Ascending aorta (tissue), 2 donors: ENCODE measurements at regions of chr12 and their contacts with region 1.

Region 1: GRCh38 chr12:24488091-24488596 is 460.8 kb downstream of the BCAT1 start:
- DNase-seq: no peak
- H3K4me3 ChIP-seq: no peak overlapping the region
- H3K27ac ChIP-seq: peak overlapping the region; percentile 13 to 19
- H3K4me1 ChIP-seq: peaks cover 0 to 18% of the 10 kb centered on the region in 2 donors
- H3K27me3 ChIP-seq: no peaks in the 10 kb centered on the region
- CTCF ChIP-seq: no peak

Region 2: DNA sequence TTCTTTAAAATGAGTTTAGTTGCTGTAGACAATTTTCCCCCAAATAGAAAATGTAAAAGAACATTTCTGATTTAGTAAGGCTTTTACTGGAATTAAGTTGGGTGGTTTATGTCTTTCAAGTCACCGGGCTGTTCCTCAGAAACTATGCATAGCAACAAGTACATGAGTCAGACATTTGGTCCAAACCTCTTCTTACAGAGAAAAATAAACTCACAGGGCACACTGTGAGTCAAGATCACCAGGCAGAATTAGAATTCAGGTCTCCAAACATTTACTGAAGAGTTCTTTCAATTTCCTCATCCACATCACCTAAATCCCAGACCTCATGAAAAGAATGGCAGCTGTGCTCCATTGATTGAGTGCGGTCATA is 62.6 kb before region 1 on chr12:
- intact Hi-C with region 1: loop called (anchors 5 kb)
- DNase-seq: no peak
- H3K4me3 ChIP-seq: no peak overlapping the region
- H3K27ac ChIP-seq: peak overlapping the region; percentile 61 to 72
- H3K4me1 ChIP-seq: peaks cover 0 to 8% of the 10 kb centered on the region in 2 donors
- H3K27me3 ChIP-seq: no peaks in the 10 kb centered on the region
- CTCF ChIP-seq: no peak